Activated naive CD4-positive, alpha-beta T cell treated with anti-CD3 and anti-CD28 coated beads for 36 hours (primary cell): ENCODE measurements at regions of chr9 and their contacts with region 1.

Region 1: GRCh38 chr9:125255781-125256391 is 5.7 kb upstream of the GAPVD1 start:
- DNase-seq: peak; percentile 38
- H3K4me3 Mint-ChIP-seq: no peak overlapping the region
- H3K27ac Mint-ChIP-seq: no peak overlapping the region
- H3K4me1 Mint-ChIP-seq: peaks cover 2% of the 10 kb centered on the region
- H3K27me3 Mint-ChIP-seq: no peaks in the 10 kb centered on the region

Region 2: DNA sequence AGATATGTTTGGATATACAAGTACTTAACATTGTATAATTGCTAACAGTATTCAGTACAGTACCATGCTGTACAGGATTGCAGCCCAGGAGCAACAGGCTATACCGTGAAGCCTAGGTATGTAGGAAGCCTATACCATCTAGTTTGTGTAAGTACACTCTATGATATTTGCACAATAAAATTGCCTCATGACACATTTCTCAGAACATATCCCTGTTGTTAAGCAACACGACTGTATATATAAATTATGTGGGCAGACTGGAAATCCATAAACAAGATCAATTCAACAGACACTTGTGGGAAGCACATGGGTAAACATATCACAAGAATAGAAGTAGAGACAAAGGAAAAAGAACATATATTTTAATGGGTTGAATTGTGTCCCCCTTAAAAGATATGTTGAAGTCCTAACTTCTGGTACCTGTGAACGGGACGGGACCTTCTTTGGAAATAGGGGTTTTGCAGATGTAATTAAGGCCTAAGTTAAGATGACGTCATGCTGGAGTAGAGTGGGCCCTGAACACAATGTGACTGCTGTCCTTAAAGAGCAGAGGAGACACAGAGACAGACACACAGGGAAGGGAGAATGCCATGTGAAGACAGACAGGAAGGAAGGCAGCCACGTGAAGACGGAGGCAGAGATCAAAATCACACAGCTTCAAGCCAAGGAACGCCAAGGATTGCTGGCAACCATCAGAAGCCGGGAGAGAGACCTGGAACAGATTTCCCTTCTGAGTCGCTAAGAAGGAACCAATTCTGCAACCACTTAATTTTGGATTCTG is 188.9 kb before region 1 on chr9:
- CTCF ChIA-PET with region 1: no interaction called
- intact Hi-C with region 1: no loop called
- DNase-seq: no peak
- H3K4me3 Mint-ChIP-seq: no peak overlapping the region
- H3K27ac Mint-ChIP-seq: no peak overlapping the region
- H3K4me1 Mint-ChIP-seq: no peaks in the 10 kb centered on the region
- H3K27me3 Mint-ChIP-seq: no peaks in the 10 kb centered on the region

Region 3: DNA sequence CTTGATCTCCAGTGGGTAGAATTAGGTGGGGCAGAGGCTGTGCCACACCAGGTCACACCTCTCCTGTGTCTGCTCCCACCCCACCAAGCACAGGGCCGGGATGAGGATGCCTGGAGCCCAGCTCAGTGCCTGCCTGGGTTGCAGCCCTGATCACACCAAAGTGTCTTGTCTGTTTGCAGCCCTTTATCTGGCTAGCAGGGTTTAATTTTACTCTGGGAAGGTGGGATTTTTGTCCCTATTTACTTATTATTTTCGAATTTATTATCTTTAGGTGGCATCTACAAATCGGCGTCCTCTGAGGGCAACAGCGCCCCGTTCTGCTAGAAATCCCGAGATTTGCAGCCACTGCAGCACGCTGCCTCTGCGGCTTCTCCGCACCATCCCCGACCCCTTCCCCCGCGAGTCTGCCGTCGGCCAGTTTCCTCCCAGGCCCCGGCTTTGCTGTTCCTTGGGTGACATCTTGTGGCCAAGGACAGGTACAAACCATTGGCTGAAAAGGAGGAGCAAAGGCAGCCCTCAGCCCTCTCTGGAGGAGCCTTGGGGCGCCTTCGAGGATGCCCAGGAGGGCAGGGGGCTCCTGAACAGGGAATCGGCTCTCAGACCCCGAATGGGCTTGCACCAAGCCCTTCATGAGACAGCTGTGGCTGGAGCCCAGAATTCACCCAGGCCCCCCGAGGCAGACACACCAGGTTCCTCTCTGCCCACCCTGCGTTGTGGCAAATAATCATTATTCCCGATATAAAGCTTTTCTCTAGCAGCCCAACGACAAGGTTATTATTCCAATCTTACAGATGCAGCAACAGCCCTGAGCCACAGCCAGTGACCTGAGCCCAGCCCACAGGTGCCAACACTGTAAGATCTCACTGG is 118.8 kb after region 1 on chr9:
- CTCF ChIA-PET with region 1: interaction called, 8 read pairs
- intact Hi-C with region 1: loop called (anchors 1 kb)
- DNase-seq: peak; percentile 80
- H3K4me3 Mint-ChIP-seq: peak overlapping the region; percentile 58
- H3K27ac Mint-ChIP-seq: no peak overlapping the region
- H3K4me1 Mint-ChIP-seq: peaks cover 7% of the 10 kb centered on the region
- H3K27me3 Mint-ChIP-seq: peaks cover 3% of the 10 kb centered on the region